Naive thymus-derived CD4-positive, alpha-beta T cell (primary cell): ENCODE measurements at regions of chr9 and their contacts with region 1.

Region 1: DNA sequence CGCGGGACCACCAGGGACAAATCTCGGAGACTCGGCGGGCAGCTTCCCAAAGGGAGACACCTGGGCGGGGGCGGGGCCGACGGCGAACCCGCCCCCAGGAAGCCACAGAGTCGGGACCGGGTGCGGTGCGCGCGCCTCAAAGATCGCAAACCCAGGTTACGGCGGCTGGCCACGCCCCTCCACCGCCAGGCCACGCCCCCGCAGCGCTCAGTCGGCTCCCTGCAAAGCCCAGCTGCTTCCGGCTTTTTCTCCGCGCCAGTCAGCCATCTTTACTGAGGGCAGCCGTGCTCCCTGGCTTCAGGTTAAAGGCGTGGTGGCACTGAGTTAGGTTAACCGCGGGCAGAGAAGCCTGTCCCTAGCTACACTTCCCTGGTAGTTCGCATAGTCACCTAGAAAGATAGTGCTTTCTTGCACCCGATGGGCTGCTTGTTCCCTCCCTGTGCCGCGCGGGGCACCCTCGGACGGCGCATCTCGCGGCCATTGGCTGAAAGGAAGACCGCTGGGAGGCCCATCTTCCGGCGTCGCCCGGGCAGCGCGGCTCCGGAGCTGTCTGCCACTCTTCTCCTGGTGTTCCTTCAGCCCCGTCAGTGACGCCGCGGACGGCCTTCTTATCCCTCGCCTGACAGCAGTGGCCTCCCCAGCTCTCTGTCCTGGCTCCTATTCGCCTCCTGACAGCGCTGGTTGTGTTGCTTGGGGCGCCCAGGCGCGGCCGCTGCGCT is at the start of gene TBC1D2:
- DNase-seq: peak; percentile 96 to 98 (median 98)
- ATAC-seq: peak; percentile 96
- H3K4me3 ChIP-seq: peak within 1 kb of the TSS; percentile 80
- H3K4me3 Mint-ChIP-seq: peak within 1 kb of the TSS; percentile 96 to 99 (median 97)
- H3K27ac ChIP-seq: peak within 1 kb of the TSS; percentile 78
- H3K27ac Mint-ChIP-seq: peak within 1 kb of the TSS; percentile 90 to 99 (median 97)
- H3K4me1 ChIP-seq: peaks cover 11 to 23% of the 10 kb centered on the region in 2 donors
- H3K4me1 Mint-ChIP-seq: peaks cover 24 to 45% (median 32%) of the 10 kb centered on the region in 7 donors
- H3K27me3 ChIP-seq: no peaks in the 10 kb centered on the region
- H3K27me3 Mint-ChIP-seq: peaks cover 0 to 13% (median 0%) of the 10 kb centered on the region in 5 donors
- total RNA-seq, gene TBC1D2: 4.9 to 16.6 (median 8.8) TPM

Region 2: GRCh38 chr9:97900738-97901565 is 354.8 kb before region 1 on chr9:
- CTCF ChIA-PET with region 1: no interaction called
- POLR2A ChIA-PET with region 1: interaction called, 20 read pairs
- intact Hi-C with region 1: loop called in 1 of 2 experiments (anchors 5 kb)
- DNase-seq: peak in 4 of 9 donors; percentile 27 to 43 (median 40)
- ATAC-seq: peak; percentile 36
- H3K4me3 ChIP-seq: no peak overlapping the region
- H3K4me3 Mint-ChIP-seq: peak overlapping the region in 8 of 10 donors; percentile 3 to 74 (median 32)
- H3K27ac ChIP-seq: peak overlapping the region; percentile 52
- H3K27ac Mint-ChIP-seq: peak overlapping the region in 8 of 9 donors; percentile 81 to 99 (median 94)
- H3K4me1 ChIP-seq: peaks cover 45 to 55% of the 10 kb centered on the region in 2 donors
- H3K4me1 Mint-ChIP-seq: peaks cover 39 to 73% (median 69%) of the 10 kb centered on the region in 7 donors
- H3K27me3 ChIP-seq: no peaks in the 10 kb centered on the region
- H3K27me3 Mint-ChIP-seq: no peaks in the 10 kb centered on the region

Region 3: GRCh38 chr9:98056269-98057137 is 199.2 kb before region 1 on chr9 and contains the start of gene NANS:
- CTCF ChIA-PET with region 1: interaction called, 4 read pairs
- POLR2A ChIA-PET with region 1: interaction called, 25 read pairs
- intact Hi-C with region 1: loop called (anchors 1 kb)
- DNase-seq: peak; percentile 84 to 93 (median 91)
- ATAC-seq: peak; percentile 99
- H3K4me3 ChIP-seq: peak within 1 kb of the TSS; percentile 73
- H3K4me3 Mint-ChIP-seq: peak within 1 kb of the TSS; percentile 93 to 100 (median 95)
- H3K27ac ChIP-seq: peak within 1 kb of the TSS; percentile 93
- H3K27ac Mint-ChIP-seq: peak within 1 kb of the TSS; percentile 93 to 100 (median 97)
- H3K4me1 ChIP-seq: peaks cover 9 to 22% of the 10 kb centered on the region in 2 donors
- H3K4me1 Mint-ChIP-seq: peaks cover 6 to 40% (median 27%) of the 10 kb centered on the region in 7 donors
- H3K27me3 ChIP-seq: no peaks in the 10 kb centered on the region
- H3K27me3 Mint-ChIP-seq: no peaks in the 10 kb centered on the region
- total RNA-seq, gene NANS: 16.3 to 58.9 (median 51.8) TPM

Region 4: GRCh38 chr9:98108531-98109031 is 147.2 kb before region 1 on chr9:
- CTCF ChIA-PET with region 1: interaction called, 3 read pairs
- POLR2A ChIA-PET with region 1: interaction called, 35 read pairs
- intact Hi-C with region 1: loop called in 1 of 2 experiments (anchors 2 kb)
- DNase-seq: peak in 8 of 9 donors; percentile 37 to 76 (median 66)
- ATAC-seq: peak; percentile 93
- H3K4me3 ChIP-seq: peak overlapping the region; percentile 10
- H3K4me3 Mint-ChIP-seq: peak overlapping the region; percentile 52 to 83 (median 73)
- H3K27ac ChIP-seq: peak overlapping the region; percentile 77
- H3K27ac Mint-ChIP-seq: peak overlapping the region; percentile 81 to 99 (median 97)
- H3K4me1 ChIP-seq: peaks cover 69 to 70% of the 10 kb centered on the region in 2 donors
- H3K4me1 Mint-ChIP-seq: peaks cover 50 to 91% (median 83%) of the 10 kb centered on the region in 7 donors
- H3K27me3 ChIP-seq: no peaks in the 10 kb centered on the region
- H3K27me3 Mint-ChIP-seq: no peaks in the 10 kb centered on the region

Region 5: GRCh38 chr9:98207606-98208005 is 48.1 kb before region 1 on chr9:
- CTCF ChIA-PET with region 1: interaction called, 3 read pairs
- POLR2A ChIA-PET with region 1: interaction called, 4 read pairs
- intact Hi-C with region 1: loop called in 1 of 2 experiments (anchors 2 kb)
- DNase-seq: no peak
- ATAC-seq: no peak
- H3K4me3 ChIP-seq: no peak overlapping the region
- H3K4me3 Mint-ChIP-seq: no peak overlapping the region
- H3K27ac ChIP-seq: no peak overlapping the region
- H3K27ac Mint-ChIP-seq: peak overlapping the region in 1 of 9 donors; percentile 28
- H3K4me1 ChIP-seq: no peaks in the 10 kb centered on the region
- H3K4me1 Mint-ChIP-seq: peaks cover 3 to 7% (median 6%) of the 10 kb centered on the region in 7 donors
- H3K27me3 ChIP-seq: no peaks in the 10 kb centered on the region
- H3K27me3 Mint-ChIP-seq: no peaks in the 10 kb centered on the region

Region 6: DNA sequence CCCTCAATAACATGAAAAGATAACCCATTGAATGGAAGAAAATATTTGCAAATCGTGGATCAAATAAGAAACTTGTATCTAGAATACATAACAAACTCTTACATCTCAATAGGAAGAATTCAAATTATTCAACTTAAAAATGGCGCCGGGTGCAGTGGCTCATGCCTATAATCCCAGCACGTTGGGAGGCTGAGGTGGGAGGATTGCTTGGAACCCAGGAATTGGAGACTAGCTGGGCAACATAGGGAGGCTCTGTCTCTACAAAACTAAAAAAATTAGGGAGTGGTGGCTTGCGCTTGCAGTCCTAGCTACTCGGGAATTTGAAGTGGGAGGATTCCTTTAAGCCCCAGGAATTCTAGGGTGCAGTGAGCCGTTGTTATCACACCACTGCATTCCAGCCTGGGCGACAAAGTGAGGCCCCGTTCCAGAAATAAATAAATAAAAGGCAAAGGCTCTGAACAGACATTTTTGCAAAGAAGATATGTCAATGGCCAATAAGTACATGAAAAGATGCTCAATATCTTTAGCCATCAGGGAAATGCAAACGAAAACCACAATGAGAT is 21.3 kb after region 1 on chr9:
- CTCF ChIA-PET with region 1: no interaction called
- POLR2A ChIA-PET with region 1: no interaction called
- intact Hi-C with region 1: no loop called
- DNase-seq: no peak
- ATAC-seq: no peak
- H3K4me3 ChIP-seq: no peak overlapping the region
- H3K4me3 Mint-ChIP-seq: no peak overlapping the region
- H3K27ac ChIP-seq: no peak overlapping the region
- H3K27ac Mint-ChIP-seq: no peak overlapping the region
- H3K4me1 ChIP-seq: no peaks in the 10 kb centered on the region
- H3K4me1 Mint-ChIP-seq: no peaks in the 10 kb centered on the region
- H3K27me3 ChIP-seq: no peaks in the 10 kb centered on the region
- H3K27me3 Mint-ChIP-seq: peaks cover 7 to 65% (median 16%) of the 10 kb centered on the region in 5 donors

Region 7: DNA sequence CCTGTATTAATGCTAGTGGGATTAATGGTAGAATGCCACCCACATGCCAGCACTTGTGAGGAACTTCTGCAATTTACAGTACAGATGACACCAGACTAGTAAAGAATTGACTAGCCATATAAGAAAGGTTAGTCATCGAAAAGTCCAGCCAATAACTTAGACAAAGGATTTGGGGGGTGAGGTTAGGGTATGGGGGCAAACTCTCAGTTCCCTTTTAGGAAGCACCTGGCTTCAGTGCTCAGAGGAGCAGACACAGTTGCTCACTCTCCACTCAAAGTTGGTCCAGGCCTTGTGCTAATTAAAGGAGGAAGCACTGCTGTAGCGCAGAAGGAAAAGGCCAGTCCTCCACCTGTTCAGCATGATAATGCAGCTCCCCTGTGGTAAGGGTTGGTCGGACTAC is 874.3 kb after region 1 on chr9:
- CTCF ChIA-PET with region 1: no interaction called
- POLR2A ChIA-PET with region 1: no interaction called
- intact Hi-C with region 1: no loop called
- DNase-seq: no peak
- ATAC-seq: peak; percentile 32
- H3K4me3 ChIP-seq: no peak overlapping the region
- H3K4me3 Mint-ChIP-seq: peak overlapping the region in 8 of 10 donors; percentile 10 to 73 (median 48)
- H3K27ac ChIP-seq: no peak overlapping the region
- H3K27ac Mint-ChIP-seq: peak overlapping the region in 8 of 9 donors; percentile 30 to 90 (median 72)
- H3K4me1 ChIP-seq: peaks cover 30 to 62% of the 10 kb centered on the region in 2 donors
- H3K4me1 Mint-ChIP-seq: peaks cover 43 to 97% (median 90%) of the 10 kb centered on the region in 7 donors
- H3K27me3 ChIP-seq: no peaks in the 10 kb centered on the region
- H3K27me3 Mint-ChIP-seq: no peaks in the 10 kb centered on the region

Region 8: DNA sequence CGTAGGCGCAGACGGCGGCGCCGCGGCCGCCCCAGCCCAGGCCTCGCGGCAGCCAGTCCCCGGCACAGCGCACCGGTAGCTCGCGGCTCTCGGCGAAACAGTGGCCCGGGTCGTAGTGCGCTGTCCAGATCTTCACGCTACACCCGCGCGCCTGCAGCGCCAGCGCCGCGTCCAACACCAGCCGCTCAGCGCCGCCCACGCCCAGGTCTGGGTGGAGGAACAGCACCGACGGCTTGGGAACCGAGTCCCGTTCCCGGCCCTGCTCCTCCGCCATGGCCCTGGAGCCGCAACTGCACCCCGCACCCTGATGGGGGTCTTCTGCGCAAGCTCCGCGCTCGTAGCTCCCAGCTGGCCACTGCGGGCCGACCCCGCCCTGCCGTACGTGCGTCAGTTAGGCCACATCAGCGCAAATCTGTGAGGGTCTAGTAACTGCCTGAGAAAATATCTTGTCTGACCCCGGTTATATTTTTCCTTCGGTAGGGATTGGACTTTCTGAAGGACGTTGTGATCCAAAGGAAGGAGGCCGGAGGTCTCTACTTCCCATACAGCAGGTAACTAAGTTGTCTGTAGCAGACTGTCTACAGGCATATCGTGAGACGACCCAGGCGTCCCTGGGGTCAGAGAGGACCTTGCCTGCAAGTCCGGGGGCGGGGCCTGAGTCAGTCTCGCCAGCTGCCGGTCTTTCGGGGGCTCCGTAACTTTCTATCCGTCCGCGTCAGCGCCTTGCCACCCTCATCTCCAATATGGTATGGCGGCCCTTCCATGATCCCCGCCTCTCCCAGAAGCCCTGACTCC is 966.1 kb after region 1 on chr9 and contains the starts of genes ALG2 and SEC61B:
- CTCF ChIA-PET with region 1: no interaction called
- POLR2A ChIA-PET with region 1: no interaction called
- intact Hi-C with region 1: loop called (anchors 5 to 10 kb)
- DNase-seq: peak; percentile 86 to 94 (median 91)
- ATAC-seq: peak; percentile 93
- H3K4me3 ChIP-seq: peak within 1 kb of the TSS; percentile 90
- H3K4me3 Mint-ChIP-seq: peak within 1 kb of the TSS; percentile 92 to 100 (median 99)
- H3K27ac ChIP-seq: peak within 1 kb of the TSS; percentile 86
- H3K27ac Mint-ChIP-seq: peak within 1 kb of the TSS; percentile 99 to 100 (median 100)
- H3K4me1 ChIP-seq: peaks cover 21 to 29% of the 10 kb centered on the region in 2 donors
- H3K4me1 Mint-ChIP-seq: peaks cover 48 to 91% (median 81%) of the 10 kb centered on the region in 7 donors
- H3K27me3 ChIP-seq: no peaks in the 10 kb centered on the region
- H3K27me3 Mint-ChIP-seq: no peaks in the 10 kb centered on the region
- total RNA-seq, gene ALG2: 13.9 to 33.7 (median 25.2) TPM
- total RNA-seq, gene SEC61B: 50.4 to 165 (median 54.6) TPM